ENCODE measurements at regions of chr14 and their contacts with region 1.

Region 1: DNA sequence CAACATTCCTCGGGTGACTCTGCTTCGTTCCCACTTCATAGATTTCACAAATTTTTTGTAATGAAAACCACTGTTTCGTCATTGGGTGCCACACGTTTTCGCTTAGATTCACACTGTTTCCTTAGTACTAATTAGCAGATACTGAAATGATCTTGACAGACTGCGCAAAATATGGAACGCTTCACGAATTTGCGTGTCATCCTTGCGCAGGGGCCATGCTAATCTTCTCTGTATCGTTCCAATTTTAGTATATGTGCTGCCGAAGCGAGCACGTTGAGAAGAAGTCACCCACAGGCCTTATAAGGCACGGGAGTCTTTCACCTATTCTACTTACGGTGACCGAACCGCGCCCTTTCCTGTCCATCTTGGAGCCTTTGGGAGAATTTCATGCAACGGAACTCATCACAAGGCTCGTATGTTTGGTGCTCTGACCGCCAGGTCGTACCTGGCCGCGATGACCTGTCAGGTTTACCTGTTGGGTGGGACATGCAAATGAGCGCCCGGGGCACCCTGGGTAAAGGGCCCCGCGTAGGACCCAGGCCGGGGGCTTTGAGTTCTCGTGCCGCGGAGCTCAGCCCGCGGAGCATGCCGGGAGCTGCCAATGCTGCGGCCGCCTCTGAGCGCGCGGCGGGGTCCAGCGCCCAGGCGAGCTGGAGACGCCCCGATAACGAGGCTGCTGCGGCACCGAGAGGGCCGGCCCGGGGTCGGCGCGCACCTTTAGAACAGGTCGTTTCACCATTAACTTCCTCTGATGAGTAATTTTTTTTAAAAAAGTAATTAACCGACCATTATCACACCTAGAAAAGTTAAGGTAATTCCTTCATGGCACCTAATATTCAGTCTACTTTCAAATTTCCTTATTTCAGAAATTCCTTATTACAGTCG is at the start of gene RNU6-8:
- DNase-seq: peak; percentile 88

Region 2: DNA sequence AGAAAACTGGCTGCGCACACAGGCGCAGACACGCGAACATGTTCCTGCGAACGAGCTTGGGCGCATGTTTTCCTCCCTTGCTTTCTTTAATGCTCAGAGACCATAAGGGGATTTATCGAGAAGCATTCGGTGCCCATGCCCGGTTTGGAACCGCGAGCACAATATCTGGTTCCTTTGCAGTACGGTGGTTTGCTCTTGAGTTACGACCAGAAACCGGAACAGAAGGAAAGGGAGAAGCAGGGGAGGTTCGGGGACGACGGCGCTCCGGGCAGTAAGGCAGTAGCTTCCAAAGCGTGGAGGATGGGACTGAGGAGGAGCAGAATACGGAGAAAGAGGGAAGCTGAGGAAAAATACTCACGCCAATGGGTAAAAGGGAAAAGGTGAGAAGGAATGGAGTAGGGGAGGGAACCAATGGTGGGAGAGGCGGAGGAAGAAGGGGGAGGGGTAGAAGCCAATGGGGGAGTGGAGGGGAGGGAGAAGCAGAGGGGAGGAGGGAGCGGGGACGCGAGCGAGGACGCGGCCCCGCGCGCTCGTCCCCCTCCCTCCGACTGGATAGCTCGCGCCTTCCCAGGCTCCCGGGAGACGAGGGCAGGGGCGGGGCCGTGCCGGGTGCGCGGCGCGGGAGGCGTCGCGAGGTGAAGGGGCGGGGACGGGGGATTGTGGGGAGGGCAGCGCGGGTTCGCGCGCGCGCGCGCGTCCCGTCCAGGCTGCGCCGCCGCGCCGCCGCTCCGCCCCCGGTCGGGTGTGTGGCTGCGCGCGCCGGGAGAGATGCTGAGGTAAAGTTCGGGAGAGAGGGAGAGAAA is 126.8 kb before region 1 on chr14:
- CTCF ChIA-PET with region 1: interaction called, 3 read pairs
- POLR2A ChIA-PET with region 1: interaction called, 14 read pairs
- DNase-seq: peak; percentile 90

Measured in HEK293T (cell line).